ENCODE measurements at regions of chr11 and their contacts with region 1.

Region 1: DNA sequence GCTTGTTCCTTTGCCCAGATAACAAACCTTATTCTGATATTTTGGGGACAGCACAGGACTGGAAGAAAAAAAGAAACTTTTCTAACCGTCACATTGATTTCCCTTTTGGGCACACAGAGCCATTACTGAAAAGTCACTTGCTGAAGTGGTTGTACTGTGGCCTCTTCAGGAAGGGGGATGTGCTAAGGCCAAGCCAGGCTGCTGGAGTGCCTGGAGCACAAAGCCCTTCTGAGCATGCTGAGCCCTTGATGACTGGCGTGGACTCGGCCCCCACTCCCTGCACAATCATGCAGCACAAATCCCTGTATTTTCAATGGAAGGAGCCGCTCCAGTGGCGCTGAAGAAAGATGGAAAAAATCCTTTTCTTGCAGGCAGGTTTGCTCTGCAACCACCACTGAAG is 164.2 kb downstream of the NTM start:
- DNase-seq: peak in 8 of 10 donors; percentile 50 to 75 (median 68)
- H3K4me3 ChIP-seq: peak overlapping the region in 1 of 59 donors; percentile 25
- H3K27ac ChIP-seq: peak overlapping the region; percentile 72 to 97 (median 92)
- H3K27me3 ChIP-seq: no peaks in the 10 kb centered on the region
- CTCF ChIP-seq: no peak

Region 2: DNA sequence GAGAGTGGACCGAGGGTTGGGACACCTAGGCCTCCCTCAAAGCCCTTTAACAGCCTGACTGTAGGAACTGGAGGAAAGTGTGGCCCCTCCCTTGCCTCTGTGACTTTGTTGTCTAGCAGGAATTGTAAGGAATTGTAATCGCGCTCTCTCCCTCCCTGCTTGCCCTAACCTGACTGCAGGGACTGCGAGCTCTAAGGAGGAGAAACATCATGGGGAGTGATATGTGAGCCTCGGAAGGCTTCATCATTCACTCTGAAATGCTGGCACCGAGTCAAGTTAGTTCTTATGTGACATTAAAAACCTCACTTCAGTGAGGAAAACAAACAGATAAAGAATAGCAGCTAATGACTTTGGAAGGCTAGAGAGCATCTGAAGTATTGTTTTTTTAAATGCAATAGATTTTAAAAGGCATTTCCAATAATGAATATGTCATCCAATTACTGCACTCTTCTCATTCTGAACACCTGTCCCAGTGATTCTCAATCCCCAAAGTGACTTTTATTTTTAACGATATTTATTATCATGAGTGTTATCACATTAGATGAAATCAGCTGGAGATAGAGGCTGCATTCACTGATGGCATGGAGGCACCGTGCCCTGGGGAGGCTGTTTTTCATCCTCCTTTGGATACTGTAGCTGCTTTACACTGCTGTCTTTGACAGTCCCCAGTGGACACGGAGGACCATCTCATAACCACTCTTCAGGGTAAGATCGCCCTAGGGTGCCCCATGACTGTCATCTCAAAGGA is 222.7 kb before region 1 on chr11:
- intact Hi-C with region 1: no loop called
- DNase-seq: no peak
- H3K4me3 ChIP-seq: no peak overlapping the region
- H3K27ac ChIP-seq: no peak overlapping the region
- H3K27me3 ChIP-seq: peaks cover 0 to 11% (median 0%) of the 10 kb centered on the region in 45 donors
- CTCF ChIP-seq: no peak

Region 3: DNA sequence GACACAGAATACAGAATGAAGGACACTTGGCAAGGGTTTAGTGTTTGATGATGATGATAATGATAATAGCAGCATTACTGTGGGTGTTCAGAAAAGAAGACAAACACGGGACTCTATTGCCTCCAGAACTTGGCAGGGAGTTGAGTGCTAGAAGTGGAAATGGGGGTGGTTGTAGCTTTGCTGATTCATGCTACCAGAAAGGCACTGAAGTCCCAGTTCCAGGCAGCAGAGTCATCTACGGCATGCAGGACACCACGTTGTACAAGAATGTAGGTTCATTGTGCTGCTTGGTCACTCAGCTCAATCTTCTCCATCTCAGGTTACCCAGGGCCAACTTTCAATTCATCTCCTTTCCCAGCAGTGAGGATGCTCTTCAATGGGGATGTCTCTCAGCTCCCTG is 48.5 kb before region 1 on chr11:
- intact Hi-C with region 1: loop called in 1 of 2 experiments (anchors 5 kb)
- DNase-seq: peak in 7 of 10 donors; percentile 48 to 72 (median 64)
- H3K4me3 ChIP-seq: no peak overlapping the region
- H3K27ac ChIP-seq: peak overlapping the region in 52 of 59 donors; percentile 5 to 94 (median 78)
- H3K27me3 ChIP-seq: no peaks in the 10 kb centered on the region
- CTCF ChIP-seq: no peak

Region 4: DNA sequence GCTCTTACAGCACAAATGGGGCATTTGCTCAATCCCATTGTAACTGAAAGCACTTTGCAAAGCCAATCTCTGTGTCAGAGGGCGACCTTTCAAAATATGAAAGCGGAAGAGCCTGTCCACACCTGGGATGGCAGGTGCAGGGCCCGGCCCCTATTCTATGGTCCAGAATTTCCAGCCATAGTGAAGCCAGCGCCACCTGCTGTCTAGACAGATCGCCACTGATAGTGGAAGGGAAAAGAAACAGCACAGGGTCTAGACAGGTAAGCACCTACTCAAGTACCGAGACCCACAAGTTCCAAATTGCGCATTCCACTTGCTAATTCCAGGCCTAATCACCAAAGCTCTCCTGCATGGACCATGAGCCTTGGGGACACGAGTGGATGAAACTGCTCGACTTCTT is 22.8 kb before region 1 on chr11:
- intact Hi-C with region 1: no loop called
- DNase-seq: peak in 2 of 10 donors; percentile 14 to 43
- H3K4me3 ChIP-seq: no peak overlapping the region
- H3K27ac ChIP-seq: no peak overlapping the region
- H3K27me3 ChIP-seq: no peaks in the 10 kb centered on the region
- CTCF ChIP-seq: peak in 52 of 56 donors; percentile 16 to 71 (median 49)

Region 5: GRCh38 chr11:131572423-131572822 is 37.8 kb after region 1 on chr11:
- intact Hi-C with region 1: loop called in 1 of 2 experiments (anchors 5 kb)
- DNase-seq: no peak
- H3K4me3 ChIP-seq: peak overlapping the region in 13 of 59 donors; percentile 2 to 30 (median 15)
- H3K27ac ChIP-seq: peak overlapping the region in 58 of 59 donors; percentile 46 to 92 (median 80)
- H3K27me3 ChIP-seq: no peaks in the 10 kb centered on the region
- CTCF ChIP-seq: no peak

Region 6: DNA sequence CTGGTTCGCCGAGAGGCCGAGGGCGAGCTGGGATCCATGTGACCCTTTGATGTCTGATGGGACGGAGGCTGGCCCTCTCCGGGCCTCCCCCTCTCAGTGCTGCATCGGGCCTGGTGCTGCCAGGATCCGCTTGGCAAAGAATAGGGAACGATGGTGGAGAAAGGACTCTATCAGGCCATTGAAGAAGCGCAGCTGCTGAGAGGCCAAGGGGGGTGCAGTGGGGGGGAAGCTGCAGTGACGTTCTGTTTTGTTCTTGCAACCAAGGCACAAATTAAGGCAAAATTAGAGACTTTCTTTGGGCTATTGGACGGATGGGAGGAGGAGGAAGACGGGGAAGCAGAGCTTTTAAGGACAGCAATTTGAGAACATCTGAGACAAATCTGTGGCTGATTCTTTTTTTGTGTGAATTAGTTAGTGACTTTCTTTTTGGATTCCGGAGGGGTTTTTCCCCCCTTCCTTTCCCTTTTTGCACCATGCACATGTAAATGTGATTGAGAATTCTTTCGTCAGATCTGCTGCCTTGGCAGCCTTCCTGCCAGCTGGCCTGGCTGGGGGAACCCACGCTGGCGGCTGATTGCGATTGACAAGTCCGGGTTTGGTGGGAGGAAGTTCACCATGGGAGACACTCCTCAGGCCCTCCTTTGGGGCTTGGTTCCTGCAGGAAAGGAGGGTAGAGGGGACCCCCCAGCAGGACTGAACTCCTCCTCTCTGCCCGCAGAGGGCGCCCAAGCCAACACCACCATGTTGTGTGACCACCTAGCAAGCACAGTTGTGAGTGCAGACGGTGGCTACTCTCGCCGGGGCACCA is 50.4 kb after region 1 on chr11:
- intact Hi-C with region 1: loop called (anchors 2 kb)
- DNase-seq: peak; percentile 49 to 98 (median 95)
- H3K4me3 ChIP-seq: peak overlapping the region in 52 of 59 donors; percentile 7 to 60 (median 39)
- H3K27ac ChIP-seq: peak overlapping the region; percentile 83 to 100 (median 98)
- H3K27me3 ChIP-seq: no peaks in the 10 kb centered on the region
- CTCF ChIP-seq: peak; percentile 20 to 90 (median 74)

Measured in dorsolateral prefrontal cortex (tissue), 120 donors.